ENCODE measurements at regions of chr15 and their contacts with region 1.

Region 1: GRCh38 chr15:57146506-57147201 is 228.2 kb downstream of the TCF12 start:
- DNase-seq: no peak
- ATAC-seq: peak; percentile 59

Region 2: DNA sequence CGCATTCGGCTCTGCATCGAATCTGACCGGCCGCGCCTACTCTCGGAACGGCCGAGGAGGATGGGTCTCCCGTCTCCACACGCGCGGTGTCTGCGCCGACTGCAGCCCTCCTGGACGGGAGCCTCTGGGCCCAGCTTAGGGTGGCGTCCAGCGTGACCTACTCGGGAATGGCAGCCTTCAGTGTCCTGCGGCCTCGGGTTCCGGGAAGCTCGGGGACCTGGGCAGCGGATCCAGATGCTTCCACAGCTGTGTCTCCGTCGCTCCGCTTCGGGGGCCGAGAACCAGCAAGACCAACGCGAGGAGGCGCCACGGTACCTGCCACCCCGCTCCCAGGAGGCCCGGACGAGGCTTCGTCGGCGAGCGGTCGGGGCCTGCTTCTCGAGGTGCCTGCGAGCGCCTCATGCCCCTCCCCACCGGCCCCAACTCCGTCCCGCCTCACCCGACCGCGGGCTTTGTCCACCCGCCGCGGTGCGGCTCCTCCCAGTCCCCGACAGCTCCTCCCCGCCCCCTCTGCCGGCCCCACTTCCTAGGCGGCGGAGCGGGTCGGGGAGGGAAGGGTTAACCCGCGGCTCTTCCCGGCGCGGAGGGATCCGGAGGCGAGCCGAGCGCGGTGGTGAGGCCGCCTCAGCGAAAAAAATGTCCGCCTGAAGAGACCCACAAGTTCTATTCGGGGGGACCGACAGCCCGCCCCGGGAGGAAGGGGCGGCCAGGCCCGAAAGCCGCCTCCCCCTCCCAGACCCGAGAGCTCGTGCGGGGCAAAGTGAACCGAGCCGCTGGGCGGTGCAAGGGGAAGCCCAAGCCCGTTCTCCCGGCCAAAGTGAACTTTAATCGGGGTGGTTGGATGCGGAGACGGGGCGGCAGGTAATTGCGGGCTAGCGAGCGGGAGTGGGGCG is 228.4 kb before region 1 on chr15 and contains the start of gene TCF12:
- intact Hi-C with region 1: loop called (anchors 10 kb)
- DNase-seq: peak; percentile 97
- ATAC-seq: peak; percentile 97
- total RNA-seq, gene TCF12: 48.4 TPM

Region 3: DNA sequence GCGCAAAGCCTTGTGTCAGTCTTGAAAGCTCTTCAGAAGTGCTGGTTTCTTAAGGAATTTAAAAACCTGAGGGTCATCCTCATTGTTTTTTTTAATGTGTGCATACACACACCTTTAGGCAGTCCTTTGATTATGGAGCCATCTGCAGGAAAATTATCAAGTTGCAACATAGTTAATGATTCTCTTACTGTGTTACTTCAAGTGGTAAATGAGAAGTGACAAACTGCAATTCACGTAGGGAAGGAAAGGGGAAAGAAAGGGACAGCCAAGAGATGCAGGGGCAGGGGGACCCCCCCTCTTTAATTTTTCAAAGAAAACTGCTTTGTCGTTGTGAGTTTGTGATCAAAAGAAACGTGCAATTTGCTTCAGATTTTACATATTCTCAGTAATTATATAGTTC is 67.2 kb after region 1 on chr15:
- intact Hi-C with region 1: loop called (anchors 2 kb)
- DNase-seq: no peak
- ATAC-seq: peak; percentile 80

Region 4: DNA sequence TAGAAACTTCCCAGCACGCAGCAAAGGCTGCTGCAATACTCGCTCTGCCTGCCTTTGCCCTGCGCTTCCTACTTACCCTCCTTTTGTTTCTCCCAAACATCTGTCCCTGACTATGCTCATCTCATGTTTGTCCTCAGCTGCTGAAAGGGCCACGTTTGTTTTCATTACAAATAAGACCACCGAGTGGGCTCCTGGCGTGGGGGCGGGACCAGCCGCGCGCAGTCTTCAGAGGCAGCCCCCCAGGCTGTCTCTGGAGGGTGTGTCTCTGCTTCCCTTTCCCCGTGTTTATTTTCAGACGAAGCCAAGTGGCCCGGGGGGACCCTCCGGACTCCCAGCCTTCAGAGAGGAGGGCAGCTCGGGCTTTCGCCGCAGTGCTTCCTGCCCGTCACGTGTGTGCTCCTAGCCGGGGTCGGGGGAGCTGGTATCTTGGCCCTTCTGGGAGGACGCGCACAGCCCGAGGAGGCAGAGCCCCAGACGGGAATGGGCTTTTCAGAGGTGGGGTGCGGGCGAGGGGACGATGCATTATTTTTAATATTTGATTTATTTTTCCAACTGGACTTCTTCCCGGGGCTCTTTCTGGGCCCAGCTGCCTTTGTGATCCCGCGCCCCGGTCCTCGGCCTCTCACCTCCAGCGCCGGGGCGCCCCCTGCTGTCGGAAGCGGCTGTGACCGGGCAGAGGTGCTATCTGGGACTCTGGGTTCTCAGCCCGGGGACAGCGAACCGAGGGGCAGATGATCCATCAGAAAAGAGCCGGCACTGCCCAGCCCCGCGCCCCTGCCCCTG is 159.7 kb after region 1 on chr15:
- intact Hi-C with region 1: loop called (anchors 5 kb)
- DNase-seq: peak; percentile 95
- ATAC-seq: peak; percentile 94

Measured in left ventricle myocardium superior (tissue), 1 donor.